ENCODE measurements at regions of chr13 and their contacts with region 1.

Region 1: GRCh38 chr13:48975856-48976575 is at the start of gene FNDC3A:
- DNase-seq: peak; percentile 82
- H3K4me3 ChIP-seq: peak within 1 kb of the TSS; percentile 89
- H3K27ac ChIP-seq: peak within 1 kb of the TSS; percentile 91
- H3K4me1 ChIP-seq: peaks cover 35% of the 10 kb centered on the region
- CTCF ChIP-seq: peak; percentile 43; the same call in 1 of the 2 replicates
- total RNA-seq, gene FNDC3A: 33.0 and 38.7 TPM in 2 replicates

Region 2: GRCh38 chr13:49110122-49110912 is 134.3 kb after region 1 on chr13:
- CTCF ChIA-PET with region 1: no interaction called
- POLR2A ChIA-PET with region 1: no interaction called
- intact Hi-C with region 1: loop called (anchors 5 kb)
- DNase-seq: peak; percentile 92
- H3K4me3 ChIP-seq: peak overlapping the region; percentile 80
- H3K27ac ChIP-seq: peak overlapping the region; percentile 19
- H3K4me1 ChIP-seq: peaks cover 20% of the 10 kb centered on the region
- CTCF ChIP-seq: no peak

Region 3: GRCh38 chr13:49190901-49191300 is 214.9 kb after region 1 on chr13:
- CTCF ChIA-PET with region 1: no interaction called
- POLR2A ChIA-PET with region 1: no interaction called
- intact Hi-C with region 1: loop called (anchors 10 kb)
- DNase-seq: no peak
- H3K4me3 ChIP-seq: no peak overlapping the region
- H3K27ac ChIP-seq: no peak overlapping the region
- H3K4me1 ChIP-seq: no peaks in the 10 kb centered on the region
- CTCF ChIP-seq: no peak

Region 4: DNA sequence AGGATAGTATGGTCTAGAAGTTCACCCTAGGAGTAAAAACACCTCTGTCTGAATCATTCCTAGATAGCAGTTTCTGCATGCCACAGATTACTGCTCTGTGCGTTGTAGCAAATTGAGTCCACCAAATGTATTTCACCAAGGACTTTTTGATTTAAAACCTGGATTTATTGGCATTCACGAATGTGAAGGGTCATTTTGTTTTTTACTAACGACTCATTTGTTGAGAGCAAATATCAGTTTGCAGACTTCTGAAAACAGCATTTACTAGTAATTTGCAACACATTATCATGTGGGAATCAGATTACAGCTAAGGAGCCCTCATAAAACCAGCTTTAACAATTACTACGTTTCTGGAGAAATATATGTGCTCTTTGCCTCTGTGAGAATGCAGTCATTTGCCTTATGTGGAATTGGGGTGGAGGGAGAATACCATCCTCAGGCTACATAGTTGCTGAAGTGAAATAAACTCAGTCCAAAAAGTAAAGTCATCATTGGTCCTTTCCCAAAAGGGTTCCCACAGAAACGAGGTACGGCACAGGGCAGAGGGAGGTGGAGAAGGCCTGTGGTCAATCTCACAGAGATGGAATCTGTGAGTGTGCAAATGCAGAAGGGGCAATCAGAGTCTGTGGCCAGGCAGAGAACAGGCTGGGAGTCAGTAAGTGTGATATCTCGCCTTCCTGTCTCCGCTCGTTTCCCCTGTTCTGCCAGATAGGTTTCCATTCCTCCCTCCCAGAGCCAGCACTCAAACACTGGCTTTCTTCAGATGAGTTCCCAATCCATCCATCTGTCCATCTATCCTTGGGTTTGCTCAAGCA is 1804.4 kb after region 1 on chr13:
- CTCF ChIA-PET with region 1: no interaction called
- POLR2A ChIA-PET with region 1: no interaction called
- intact Hi-C with region 1: no loop called
- DNase-seq: no peak
- H3K4me3 ChIP-seq: no peak overlapping the region
- H3K27ac ChIP-seq: no peak overlapping the region
- H3K4me1 ChIP-seq: no peaks in the 10 kb centered on the region
- CTCF ChIP-seq: no peak